MCF 10A (cell line): ENCODE measurements at regions of chr16 and their contacts with region 1.

Region 1: DNA sequence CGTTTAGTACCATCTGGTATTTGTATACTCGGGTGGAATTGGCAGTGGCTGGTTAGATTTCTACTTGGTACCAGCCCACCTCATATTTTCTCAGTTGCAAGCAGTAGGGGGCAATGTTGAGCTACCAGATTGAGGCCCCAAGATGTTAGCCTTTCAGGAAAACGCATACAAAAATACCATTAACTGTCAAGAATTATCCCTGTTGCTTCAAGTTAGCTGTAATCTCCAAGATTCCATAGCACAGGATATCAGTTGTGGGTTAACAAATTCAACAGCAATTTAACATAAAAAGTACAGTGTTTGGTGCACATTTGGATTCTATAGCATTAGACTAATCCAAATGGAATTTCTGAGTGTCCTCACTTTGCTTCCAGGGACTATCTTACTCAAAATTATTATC is 188.2 kb downstream of the FTO start:
- DNase-seq: peak; percentile 77
- H3K4me3 Mint-ChIP-seq: no peak overlapping the region
- H3K27ac Mint-ChIP-seq: no peak overlapping the region
- H3K4me1 Mint-ChIP-seq: peaks cover 16% of the 10 kb centered on the region
- H3K27me3 Mint-ChIP-seq: no peaks in the 10 kb centered on the region
- CTCF ChIP-seq: peak; percentile 67

Region 2: DNA sequence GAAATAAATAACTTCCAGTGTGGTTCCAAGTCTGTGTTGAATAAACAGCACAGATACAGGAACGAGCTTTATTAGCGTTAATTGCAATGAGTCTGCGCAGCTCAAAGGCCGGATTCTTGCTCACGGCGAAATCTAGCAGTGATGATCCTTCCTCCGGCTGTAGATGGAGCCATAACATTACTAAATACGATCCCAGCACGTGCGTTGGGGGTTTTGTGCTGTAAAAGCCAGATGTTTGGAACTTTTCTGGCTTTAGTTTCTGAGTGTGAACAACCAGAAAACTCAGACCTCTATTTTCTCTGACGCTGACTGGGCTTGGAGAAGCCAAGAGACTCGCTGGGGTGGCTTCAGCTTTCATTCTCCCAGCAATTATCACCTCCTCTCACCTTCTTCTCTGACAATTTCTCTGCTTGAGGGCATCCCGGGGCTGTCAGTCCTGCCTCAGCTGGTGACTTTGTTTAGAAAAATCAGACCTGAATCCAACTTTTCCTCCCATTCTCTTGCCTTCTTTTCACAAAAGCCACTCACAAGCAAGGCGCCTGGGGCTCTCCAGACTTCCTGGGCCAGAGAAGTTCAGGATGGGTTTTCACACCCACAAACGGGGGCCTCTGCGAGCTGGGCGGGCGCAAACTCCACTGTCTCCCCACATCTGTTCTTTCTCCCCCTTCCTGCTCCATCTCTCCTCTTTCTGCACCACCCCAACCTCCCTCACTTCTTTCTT is 342.0 kb before region 1 on chr16:
- CTCF ChIA-PET with region 1: interaction called, 9 read pairs
- POLR2A ChIA-PET with region 1: no interaction called
- intact Hi-C with region 1: loop called (anchors 5 kb)
- DNase-seq: peak; percentile 81
- H3K4me3 Mint-ChIP-seq: no peak overlapping the region
- H3K27ac Mint-ChIP-seq: no peak overlapping the region
- H3K4me1 Mint-ChIP-seq: peaks cover 6% of the 10 kb centered on the region
- H3K27me3 Mint-ChIP-seq: no peaks in the 10 kb centered on the region
- CTCF ChIP-seq: peak; percentile 69

Region 3: GRCh38 chr16:53952215-53953208 is 60.4 kb after region 1 on chr16:
- CTCF ChIA-PET with region 1: no interaction called
- POLR2A ChIA-PET with region 1: no interaction called
- intact Hi-C with region 1: no loop called
- DNase-seq: peak; percentile 51
- H3K4me3 Mint-ChIP-seq: peak overlapping the region; percentile 56
- H3K27ac Mint-ChIP-seq: peak overlapping the region; percentile 66
- H3K4me1 Mint-ChIP-seq: peaks cover 9% of the 10 kb centered on the region
- H3K27me3 Mint-ChIP-seq: no peaks in the 10 kb centered on the region
- CTCF ChIP-seq: no peak

Region 4: DNA sequence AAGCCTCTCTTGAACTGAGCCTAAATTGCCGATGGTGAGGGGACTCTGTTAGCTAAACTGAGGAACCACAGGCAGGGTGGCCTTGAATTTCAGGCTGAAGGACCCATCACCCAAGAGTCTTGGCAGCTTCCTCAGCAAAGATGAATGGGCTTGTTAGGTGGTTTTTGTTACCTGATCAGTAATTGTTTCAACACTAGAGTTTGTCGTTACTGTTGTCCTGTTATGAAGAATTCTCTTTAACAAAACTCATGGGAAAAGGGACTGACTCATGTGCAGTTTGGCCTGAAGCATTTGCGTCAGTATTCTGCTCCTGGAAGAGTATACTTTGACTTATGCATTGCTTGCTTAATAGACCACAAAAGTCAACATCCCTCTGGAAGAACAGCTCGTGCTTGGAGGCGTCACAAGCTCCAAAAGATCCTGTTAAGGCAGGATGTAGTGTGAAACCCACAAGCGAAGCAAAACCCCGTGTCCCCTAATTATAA is 188.4 kb after region 1 on chr16:
- CTCF ChIA-PET with region 1: interaction called, 3 read pairs
- POLR2A ChIA-PET with region 1: no interaction called
- intact Hi-C with region 1: loop called (anchors 10 kb)
- DNase-seq: peak; percentile 99
- H3K4me3 Mint-ChIP-seq: peak overlapping the region; percentile 54
- H3K27ac Mint-ChIP-seq: peak overlapping the region; percentile 99
- H3K4me1 Mint-ChIP-seq: peaks cover 41% of the 10 kb centered on the region
- H3K27me3 Mint-ChIP-seq: no peaks in the 10 kb centered on the region
- CTCF ChIP-seq: no peak

Region 5: DNA sequence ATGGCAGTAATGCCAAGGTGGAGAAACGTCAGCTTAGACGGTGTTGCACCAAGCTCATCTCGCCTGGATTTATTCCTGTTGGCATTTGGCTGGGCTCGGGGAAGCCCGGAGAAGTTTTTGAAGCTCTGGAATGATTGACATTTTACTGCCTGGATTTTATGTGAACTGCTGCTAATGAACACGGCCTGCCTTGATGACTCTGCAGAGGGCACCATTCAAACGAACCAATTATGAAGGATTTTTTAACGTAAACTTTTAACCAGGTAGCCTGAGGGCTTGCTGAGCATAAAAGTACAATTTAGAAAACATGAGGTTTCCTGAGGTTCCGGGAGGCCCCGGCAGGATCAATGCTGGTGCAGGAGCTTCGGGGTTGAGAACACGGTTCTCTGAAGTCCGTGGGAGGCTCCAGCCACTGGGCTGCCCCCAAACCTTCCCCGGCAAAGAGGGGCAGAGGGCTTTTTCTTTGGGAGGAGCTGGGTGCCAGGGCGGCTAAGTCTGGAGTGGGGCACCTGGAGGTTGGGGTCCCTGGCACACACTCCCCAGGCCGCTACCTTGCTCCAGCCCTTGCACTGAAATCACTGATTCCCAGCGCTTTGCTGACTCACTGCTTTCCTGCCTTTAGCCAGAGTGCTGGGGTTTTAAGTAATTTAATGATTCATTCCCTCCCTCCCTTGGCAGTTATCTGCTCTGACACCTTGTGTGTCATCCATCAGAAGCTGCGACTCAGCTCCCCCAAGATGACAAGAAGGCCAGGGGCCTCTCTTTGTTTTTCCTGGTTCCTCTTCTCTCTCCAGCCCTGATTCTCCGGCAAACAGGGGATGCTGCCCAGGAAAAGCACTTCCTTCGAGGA is 555.7 kb after region 1 on chr16:
- CTCF ChIA-PET with region 1: no interaction called
- POLR2A ChIA-PET with region 1: no interaction called
- intact Hi-C with region 1: loop called (anchors 2 kb)
- DNase-seq: peak; percentile 93
- H3K4me3 Mint-ChIP-seq: no peak overlapping the region
- H3K27ac Mint-ChIP-seq: no peak overlapping the region
- H3K4me1 Mint-ChIP-seq: peaks cover 32% of the 10 kb centered on the region
- H3K27me3 Mint-ChIP-seq: no peaks in the 10 kb centered on the region
- CTCF ChIP-seq: no peak

Region 6: GRCh38 chr16:54812229-54812628 is 920.1 kb after region 1 on chr16:
- CTCF ChIA-PET with region 1: interaction called, 3 read pairs
- POLR2A ChIA-PET with region 1: no interaction called
- intact Hi-C with region 1: loop called (anchors 1 kb)
- DNase-seq: peak; percentile 27
- H3K4me3 Mint-ChIP-seq: no peak overlapping the region
- H3K27ac Mint-ChIP-seq: no peak overlapping the region
- H3K4me1 Mint-ChIP-seq: no peaks in the 10 kb centered on the region
- H3K27me3 Mint-ChIP-seq: no peaks in the 10 kb centered on the region
- CTCF ChIP-seq: no peak